Vagina (tissue), 2 donors: ENCODE measurements at regions of chr2 and their contacts with region 1.

Region 1: GRCh38 chr2:9142551-9143263 is 63.9 kb upstream of the ASAP2 start:
- DNase-seq: peak in 1 of 2 donors; percentile 94
- H3K4me3 ChIP-seq: peak overlapping the region in 1 of 2 donors; percentile 32
- H3K27ac ChIP-seq: peak overlapping the region; percentile 34
- H3K4me1 ChIP-seq: peaks cover 19% of the 10 kb centered on the region
- H3K27me3 ChIP-seq: no peaks in the 10 kb centered on the region
- CTCF ChIP-seq: peak; percentile 97 to 99 (median 98)
- POLR2A ChIP-seq: no peak

Region 2: DNA sequence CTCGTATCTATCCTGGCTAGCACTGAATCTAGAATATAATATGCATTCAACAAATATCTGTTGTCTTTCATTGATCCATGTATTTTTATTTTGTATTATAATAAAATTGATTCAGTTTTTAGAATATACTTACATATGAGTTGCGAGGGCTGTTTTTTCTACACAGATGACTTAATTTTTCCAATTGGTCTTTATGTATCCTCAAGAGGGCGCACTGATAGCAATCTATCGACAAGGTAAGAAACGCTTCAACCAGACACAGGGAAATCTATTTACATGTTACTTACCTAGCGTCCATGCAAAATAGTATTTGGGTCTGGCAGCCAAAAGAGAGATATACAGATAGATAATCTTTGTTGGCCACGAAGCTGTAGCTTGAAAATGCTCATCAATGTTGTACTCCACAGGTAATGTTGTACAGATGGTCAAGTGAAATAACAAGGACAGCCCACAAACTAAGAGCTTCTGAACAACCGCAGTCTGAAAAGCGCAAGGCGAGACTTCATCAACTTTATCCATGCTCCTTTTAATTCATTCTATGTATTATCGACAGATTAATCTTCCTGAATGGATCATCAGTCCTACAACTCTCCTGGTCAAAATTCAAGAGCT is 269.8 kb before region 1 on chr2:
- intact Hi-C with region 1: loop called (anchors 10 kb)
- DNase-seq: no peak
- H3K4me3 ChIP-seq: no peak overlapping the region
- H3K27ac ChIP-seq: no peak overlapping the region
- H3K4me1 ChIP-seq: no peaks in the 10 kb centered on the region
- H3K27me3 ChIP-seq: no peaks in the 10 kb centered on the region
- CTCF ChIP-seq: peak in 2 of 3 experiments; percentile 3 to 30
- POLR2A ChIP-seq: no peak

Region 3: DNA sequence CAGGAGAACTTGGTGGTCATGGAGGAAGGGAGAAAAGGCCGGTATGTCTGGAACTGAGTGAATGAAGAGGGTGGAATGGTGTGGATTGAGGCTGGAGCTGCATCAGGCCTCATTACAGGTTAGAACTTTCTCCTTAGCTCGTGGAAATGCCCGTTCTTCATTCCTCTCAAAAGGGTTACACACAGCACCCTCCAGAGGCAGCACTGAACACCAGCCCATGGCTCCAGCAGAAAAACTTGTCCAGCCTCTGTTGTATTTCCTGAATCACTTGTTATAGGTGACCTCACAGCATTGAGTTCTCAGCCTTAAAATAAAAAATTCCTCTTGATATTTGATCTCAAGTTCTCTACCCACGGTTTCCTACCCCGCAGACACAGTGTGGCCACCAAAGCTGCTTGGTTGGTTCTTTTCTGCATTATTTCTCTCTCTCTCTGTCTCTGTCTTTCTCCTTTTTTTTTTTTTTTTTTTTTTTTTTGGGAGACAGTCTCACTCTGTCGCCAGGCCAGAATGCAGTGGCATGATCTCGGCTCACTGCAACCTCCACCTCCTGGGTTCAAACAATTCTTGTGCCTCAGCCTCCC is 191.0 kb after region 1 on chr2:
- intact Hi-C with region 1: loop called (anchors 10 kb)
- DNase-seq: no peak
- H3K4me3 ChIP-seq: no peak overlapping the region
- H3K27ac ChIP-seq: peak overlapping the region; percentile 41
- H3K4me1 ChIP-seq: peaks cover 16% of the 10 kb centered on the region
- H3K27me3 ChIP-seq: no peaks in the 10 kb centered on the region
- CTCF ChIP-seq: peak; percentile 22 to 62 (median 41)
- POLR2A ChIP-seq: no peak